Heart left ventricle (tissue), 16 donors: ENCODE measurements at regions of chr11 and their contacts with region 1.

Region 1: DNA sequence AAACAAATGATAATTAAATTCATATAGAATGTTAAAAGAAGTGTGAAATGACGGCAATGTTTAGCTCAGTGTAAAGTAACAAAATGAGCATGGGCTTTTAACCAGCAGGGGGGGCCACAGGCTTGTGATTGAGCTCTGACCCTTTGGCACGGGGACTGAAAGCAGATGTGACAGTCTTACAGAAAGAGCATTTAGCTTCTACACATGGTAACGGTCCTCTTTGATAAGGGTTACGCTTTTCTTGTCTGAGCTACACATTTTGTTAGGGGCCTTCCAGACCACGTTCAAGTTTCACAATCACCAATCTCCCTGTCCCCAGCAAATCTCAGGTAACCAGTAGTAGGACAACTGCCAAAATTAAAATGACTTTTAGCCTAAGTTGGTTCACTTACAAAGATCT is 262.5 kb downstream of the DCDC1 start:
- DNase-seq: peak in 4 of 5 donors; percentile 34 to 60 (median 41)
- ATAC-seq: peak in 2 of 4 donors; percentile 52 to 57
- H3K4me3 ChIP-seq: no peak overlapping the region
- H3K27ac ChIP-seq: no peak overlapping the region
- H3K4me1 ChIP-seq: no peaks in the 10 kb centered on the region
- H3K27me3 ChIP-seq: peaks cover 0 to 14% (median 0%) of the 10 kb centered on the region in 9 donors
- CTCF ChIP-seq: peak; percentile 37 to 76 (median 54)
- POLR2A ChIP-seq: no peak

Region 2: GRCh38 chr11:30956751-30957150 is 150.3 kb before region 1 on chr11:
- intact Hi-C with region 1: no loop called
- DNase-seq: no peak
- ATAC-seq: no peak
- H3K4me3 ChIP-seq: no peak overlapping the region
- H3K27ac ChIP-seq: no peak overlapping the region
- H3K4me1 ChIP-seq: no peaks in the 10 kb centered on the region
- H3K27me3 ChIP-seq: no peaks in the 10 kb centered on the region
- CTCF ChIP-seq: no peak
- POLR2A ChIP-seq: no peak

Region 3: GRCh38 chr11:31870609-31871309 is 763.7 kb after region 1 on chr11:
- intact Hi-C with region 1: loop called in 1 of 10 experiments (anchors 5 kb)
- DNase-seq: peak in 4 of 5 donors; percentile 13 to 39 (median 34)
- ATAC-seq: peak in 3 of 4 donors; percentile 45 to 67 (median 50)
- H3K4me3 ChIP-seq: no peak overlapping the region
- H3K27ac ChIP-seq: no peak overlapping the region
- H3K4me1 ChIP-seq: peaks cover 0 to 5% (median 0%) of the 10 kb centered on the region in 12 donors
- H3K27me3 ChIP-seq: peaks cover 0 to 55% (median 6%) of the 10 kb centered on the region in 9 donors
- CTCF ChIP-seq: peak; percentile 39 to 71 (median 62)
- POLR2A ChIP-seq: no peak

Region 4: GRCh38 chr11:31958076-31958735 is 851.1 kb after region 1 on chr11:
- intact Hi-C with region 1: loop called in 1 of 10 experiments (anchors 5 kb)
- DNase-seq: peak; percentile 60 to 82 (median 63)
- ATAC-seq: peak; percentile 74 to 92 (median 81)
- H3K4me3 ChIP-seq: no peak overlapping the region
- H3K27ac ChIP-seq: no peak overlapping the region
- H3K4me1 ChIP-seq: peaks cover 0 to 5% (median 0%) of the 10 kb centered on the region in 12 donors
- H3K27me3 ChIP-seq: no peaks in the 10 kb centered on the region
- CTCF ChIP-seq: peak; percentile 64 to 86 (median 78)
- POLR2A ChIP-seq: no peak

Region 5: GRCh38 chr11:32176223-32176934 is 1069.3 kb after region 1 on chr11:
- intact Hi-C with region 1: loop called in 5 of 10 experiments (anchors 2 to 10 kb)
- DNase-seq: peak in 4 of 5 donors; percentile 54 to 70 (median 66)
- ATAC-seq: peak in 3 of 4 donors; percentile 62 to 78 (median 74)
- H3K4me3 ChIP-seq: no peak overlapping the region
- H3K27ac ChIP-seq: no peak overlapping the region
- H3K4me1 ChIP-seq: peaks cover 0 to 9% (median 0%) of the 10 kb centered on the region in 12 donors
- H3K27me3 ChIP-seq: peaks cover 0 to 7% (median 0%) of the 10 kb centered on the region in 9 donors
- CTCF ChIP-seq: peak; percentile 82 to 96 (median 88)
- POLR2A ChIP-seq: no peak